B cell (primary cell): ENCODE measurements at regions of chr2 and their contacts with region 1.

Region 1: GRCh38 chr2:231674587-231675338 is 33.6 kb upstream of the PTMA start:
- DNase-seq: peak; percentile 88
- ATAC-seq: peak; percentile 37
- H3K4me3 ChIP-seq: peak overlapping the region in 2 of 5 experiments; percentile 13 to 34
- H3K4me3 Mint-ChIP-seq: peak overlapping the region; percentile 91
- H3K27ac ChIP-seq: peak overlapping the region; percentile 98 to 100
- H3K27ac Mint-ChIP-seq: peak overlapping the region; percentile 100
- H3K4me1 ChIP-seq: peaks cover 64 to 79% of the 10 kb centered on the region in 2 donors
- H3K4me1 Mint-ChIP-seq: peaks cover 69% of the 10 kb centered on the region
- H3K27me3 ChIP-seq: no peaks in the 10 kb centered on the region
- H3K27me3 Mint-ChIP-seq: no peaks in the 10 kb centered on the region
- CTCF ChIP-seq: peak; percentile 84

Region 2: GRCh38 chr2:231463698-231464575 is 210.8 kb before region 1 on chr2 and contains the start of gene NCL:
- CTCF ChIA-PET with region 1: interaction called, 3 read pairs
- POLR2A ChIA-PET with region 1: interaction called, 16 read pairs
- intact Hi-C with region 1: loop called (anchors 2 kb)
- DNase-seq: peak; percentile 98
- ATAC-seq: peak; percentile 51
- H3K4me3 ChIP-seq: peak within 1 kb of the TSS; percentile 62 to 97 (median 93)
- H3K4me3 Mint-ChIP-seq: peak within 1 kb of the TSS; percentile 99
- H3K27ac ChIP-seq: peak within 1 kb of the TSS; percentile 97 to 98
- H3K27ac Mint-ChIP-seq: peak within 1 kb of the TSS; percentile 100
- H3K4me1 ChIP-seq: peaks cover 29 to 33% of the 10 kb centered on the region in 2 donors
- H3K4me1 Mint-ChIP-seq: peaks cover 46% of the 10 kb centered on the region
- H3K27me3 ChIP-seq: no peaks in the 10 kb centered on the region
- H3K27me3 Mint-ChIP-seq: no peaks in the 10 kb centered on the region
- CTCF ChIP-seq: no peak
- total RNA-seq, gene NCL: 383 and 439 TPM in 2 replicates

Region 3: GRCh38 chr2:231612179-231613053 is 62.3 kb before region 1 on chr2:
- CTCF ChIA-PET with region 1: interaction called, 561 read pairs
- POLR2A ChIA-PET with region 1: interaction called, 422 read pairs
- intact Hi-C with region 1: loop called (anchors 1 kb)
- DNase-seq: peak; percentile 93
- ATAC-seq: peak; percentile 39
- H3K4me3 ChIP-seq: peak overlapping the region in 4 of 5 experiments; percentile 9 to 68 (median 50)
- H3K4me3 Mint-ChIP-seq: peak overlapping the region; percentile 86
- H3K27ac ChIP-seq: peak overlapping the region; percentile 90 to 96
- H3K27ac Mint-ChIP-seq: peak overlapping the region; percentile 96
- H3K4me1 ChIP-seq: peaks cover 21 to 34% of the 10 kb centered on the region in 2 donors
- H3K4me1 Mint-ChIP-seq: peaks cover 42% of the 10 kb centered on the region
- H3K27me3 ChIP-seq: no peaks in the 10 kb centered on the region
- H3K27me3 Mint-ChIP-seq: no peaks in the 10 kb centered on the region
- CTCF ChIP-seq: peak; percentile 87

Region 4: GRCh38 chr2:231648587-231649174 is 26.1 kb before region 1 on chr2:
- CTCF ChIA-PET with region 1: interaction called, 239 read pairs
- POLR2A ChIA-PET with region 1: interaction called, 26 read pairs
- intact Hi-C with region 1: loop called (anchors 1 kb)
- DNase-seq: peak; percentile 77
- ATAC-seq: peak; percentile 97
- H3K4me3 ChIP-seq: no peak overlapping the region
- H3K4me3 Mint-ChIP-seq: no peak overlapping the region
- H3K27ac ChIP-seq: no peak overlapping the region
- H3K27ac Mint-ChIP-seq: peak overlapping the region; percentile 74
- H3K4me1 ChIP-seq: peaks cover 0 to 10% of the 10 kb centered on the region in 2 donors
- H3K4me1 Mint-ChIP-seq: peaks cover 7% of the 10 kb centered on the region
- H3K27me3 ChIP-seq: no peaks in the 10 kb centered on the region
- H3K27me3 Mint-ChIP-seq: no peaks in the 10 kb centered on the region
- CTCF ChIP-seq: peak; percentile 79

Region 5: DNA sequence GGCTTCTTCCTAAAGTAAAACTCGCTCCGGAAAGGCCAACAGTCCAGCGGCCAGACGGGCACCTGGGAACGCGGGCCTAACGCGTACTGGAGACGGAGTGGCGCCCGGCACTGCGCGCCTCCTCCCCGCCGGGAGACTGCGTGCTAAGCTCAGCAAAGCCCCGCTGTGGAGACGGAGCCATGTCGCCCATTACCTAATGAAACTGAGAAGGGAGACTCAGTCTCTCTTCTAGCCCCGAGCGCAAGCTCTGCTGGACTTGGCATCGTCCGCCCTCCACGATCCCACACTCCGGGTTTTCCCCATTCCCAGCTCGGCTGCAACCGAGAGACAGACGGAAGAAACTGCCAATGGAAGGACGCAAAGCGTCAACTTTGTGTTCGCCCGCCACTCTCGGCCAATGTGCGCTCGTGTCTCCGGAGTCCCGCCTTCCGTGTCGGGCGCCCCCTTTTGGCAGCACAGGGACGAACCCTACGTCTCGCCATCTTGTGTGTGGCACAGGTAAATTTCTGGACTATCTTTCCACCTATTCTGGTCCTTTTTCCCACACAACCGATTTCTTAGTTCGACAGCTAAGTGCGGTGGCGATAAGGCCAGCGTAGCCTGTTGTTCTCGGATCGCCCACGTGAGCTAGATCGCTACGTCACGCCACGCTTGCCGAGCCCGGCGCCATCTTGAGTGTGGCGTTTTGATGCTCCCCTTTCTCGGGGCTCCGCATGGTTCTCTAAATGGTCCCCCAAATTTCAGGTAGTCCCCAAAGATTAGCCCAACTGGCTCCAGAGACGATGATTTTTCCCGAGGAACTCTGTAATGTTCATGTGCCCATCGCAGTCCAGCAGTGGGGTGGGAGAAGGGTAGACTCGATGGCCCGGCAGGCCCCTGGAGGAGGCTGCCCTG is 32.2 kb after region 1 on chr2:
- CTCF ChIA-PET with region 1: interaction called, 785 read pairs
- POLR2A ChIA-PET with region 1: interaction called, 345 read pairs
- intact Hi-C with region 1: loop called (anchors 1 kb)
- DNase-seq: peak; percentile 98
- ATAC-seq: peak; percentile 48
- H3K4me3 ChIP-seq: peak overlapping the region; percentile 77 to 99 (median 89)
- H3K4me3 Mint-ChIP-seq: peak overlapping the region; percentile 99
- H3K27ac ChIP-seq: peak overlapping the region; percentile 98 to 99
- H3K27ac Mint-ChIP-seq: peak overlapping the region; percentile 100
- H3K4me1 ChIP-seq: peaks cover 20 to 38% of the 10 kb centered on the region in 2 donors
- H3K4me1 Mint-ChIP-seq: peaks cover 28% of the 10 kb centered on the region
- H3K27me3 ChIP-seq: no peaks in the 10 kb centered on the region
- H3K27me3 Mint-ChIP-seq: no peaks in the 10 kb centered on the region
- CTCF ChIP-seq: peak; percentile 96

Region 6: DNA sequence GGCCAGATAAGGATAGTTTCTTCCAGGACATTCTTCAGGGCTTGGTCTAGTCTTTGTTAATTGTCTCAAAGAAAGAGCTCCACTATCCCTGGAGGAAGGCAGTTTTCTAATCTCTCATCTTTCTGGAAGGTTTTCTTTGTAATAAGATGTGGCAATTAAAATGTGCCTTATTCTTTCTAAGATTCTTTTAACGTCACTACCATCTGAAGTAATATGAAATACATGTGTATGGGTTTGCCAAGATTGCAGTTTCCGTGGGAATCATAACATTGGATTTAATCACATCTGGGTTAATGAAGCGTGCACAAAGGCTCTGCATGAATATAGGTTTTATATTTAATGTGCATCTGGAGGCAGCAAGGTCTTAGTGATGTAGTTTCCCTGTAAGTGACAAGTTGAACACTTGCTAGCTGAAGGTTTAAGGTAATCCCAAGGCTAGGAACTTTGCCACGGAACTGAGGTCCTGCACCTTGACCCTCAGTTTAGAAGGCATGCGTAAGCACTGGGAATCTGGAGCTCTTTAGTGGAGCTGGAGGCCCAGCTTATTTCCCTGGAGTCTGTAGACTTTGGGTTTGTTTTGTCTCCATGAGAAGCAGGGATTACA is 312.5 kb after region 1 on chr2:
- CTCF ChIA-PET with region 1: no interaction called
- POLR2A ChIA-PET with region 1: no interaction called
- intact Hi-C with region 1: no loop called
- DNase-seq: no peak
- ATAC-seq: no peak
- H3K4me3 ChIP-seq: no peak overlapping the region
- H3K4me3 Mint-ChIP-seq: no peak overlapping the region
- H3K27ac ChIP-seq: no peak overlapping the region
- H3K27ac Mint-ChIP-seq: no peak overlapping the region
- H3K4me1 ChIP-seq: no peaks in the 10 kb centered on the region
- H3K4me1 Mint-ChIP-seq: peaks cover 9% of the 10 kb centered on the region
- H3K27me3 ChIP-seq: no peaks in the 10 kb centered on the region
- H3K27me3 Mint-ChIP-seq: no peaks in the 10 kb centered on the region
- CTCF ChIP-seq: no peak

Region 7: DNA sequence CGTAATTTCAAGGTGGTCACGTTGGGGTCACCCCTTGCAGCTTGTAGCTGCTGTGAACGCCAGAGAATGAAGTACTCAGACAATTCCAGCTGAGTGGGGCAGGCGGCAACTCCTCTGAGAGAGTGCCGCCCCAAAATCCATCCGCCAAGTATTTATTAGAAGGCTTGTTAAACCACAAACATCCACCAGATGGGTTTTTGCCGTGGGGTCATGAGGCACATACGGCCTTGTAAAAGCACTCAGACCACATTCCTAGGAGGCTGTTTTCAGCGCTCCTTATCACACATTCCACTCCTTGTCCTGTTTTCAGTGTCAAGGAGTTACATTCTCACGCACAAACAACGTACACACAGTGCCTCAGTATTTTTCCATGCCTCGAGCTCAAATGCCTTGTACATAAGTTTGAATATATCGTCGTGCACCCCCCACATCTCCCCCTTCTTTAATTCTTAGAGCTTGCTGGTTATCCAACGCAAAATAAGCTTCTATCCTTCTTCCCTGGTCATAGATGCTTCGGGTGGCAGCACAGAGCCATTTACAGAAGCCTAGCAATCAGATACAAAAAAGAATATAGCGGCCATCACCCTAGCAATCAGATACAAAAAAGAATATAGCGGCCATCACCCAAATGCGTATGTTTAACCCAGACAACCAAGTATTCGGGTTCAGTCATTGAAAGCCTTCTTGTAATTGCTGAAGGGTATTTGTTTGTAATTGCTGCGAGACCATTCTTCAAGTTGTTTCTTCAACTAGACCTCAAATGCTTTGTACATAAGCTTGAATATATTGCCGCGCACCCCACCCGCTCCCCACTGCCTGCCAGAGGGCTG is 711.1 kb after region 1 on chr2:
- CTCF ChIA-PET with region 1: no interaction called
- POLR2A ChIA-PET with region 1: no interaction called
- intact Hi-C with region 1: no loop called
- DNase-seq: no peak
- ATAC-seq: no peak
- H3K4me3 ChIP-seq: no peak overlapping the region
- H3K4me3 Mint-ChIP-seq: peak overlapping the region; percentile 32
- H3K27ac ChIP-seq: no peak overlapping the region
- H3K27ac Mint-ChIP-seq: no peak overlapping the region
- H3K4me1 ChIP-seq: peaks cover 11 to 15% of the 10 kb centered on the region in 2 donors
- H3K4me1 Mint-ChIP-seq: peaks cover 19% of the 10 kb centered on the region
- H3K27me3 ChIP-seq: peaks cover 0 to 26% (median 6%) of the 10 kb centered on the region in 4 experiments
- H3K27me3 Mint-ChIP-seq: peaks cover 34% of the 10 kb centered on the region
- CTCF ChIP-seq: no peak